Natural killer cell (primary cell): ENCODE measurements at regions of chr3 and their contacts with region 1.

Region 1: GRCh38 chr3:3200632-3201212 is 21.2 kb upstream of the CRBN start:
- DNase-seq: peak in 1 of 2 donors; percentile 68
- ATAC-seq: peak in 2 of 3 donors; percentile 61 to 64
- H3K4me3 ChIP-seq: no peak overlapping the region
- H3K4me3 Mint-ChIP-seq: no peak overlapping the region
- H3K27ac ChIP-seq: no peak overlapping the region
- H3K27ac Mint-ChIP-seq: no peak overlapping the region
- H3K4me1 ChIP-seq: peaks cover 14% of the 10 kb centered on the region
- H3K4me1 Mint-ChIP-seq: peaks cover 15% of the 10 kb centered on the region in 2 donors
- H3K27me3 ChIP-seq: no peaks in the 10 kb centered on the region
- H3K27me3 Mint-ChIP-seq: no peaks in the 10 kb centered on the region
- CTCF ChIP-seq: peak; percentile 81

Region 2: GRCh38 chr3:3134750-3135448 is 65.8 kb before region 1 on chr3:
- intact Hi-C with region 1: no loop called
- DNase-seq: no peak
- ATAC-seq: peak in 2 of 3 donors; percentile 21 to 64
- H3K4me3 ChIP-seq: no peak overlapping the region
- H3K4me3 Mint-ChIP-seq: no peak overlapping the region
- H3K27ac ChIP-seq: no peak overlapping the region
- H3K27ac Mint-ChIP-seq: peak overlapping the region; percentile 6 to 44
- H3K4me1 ChIP-seq: no peaks in the 10 kb centered on the region
- H3K4me1 Mint-ChIP-seq: peaks cover 29 to 39% of the 10 kb centered on the region in 2 donors
- H3K27me3 ChIP-seq: no peaks in the 10 kb centered on the region
- H3K27me3 Mint-ChIP-seq: no peaks in the 10 kb centered on the region
- CTCF ChIP-seq: no peak

Region 3: DNA sequence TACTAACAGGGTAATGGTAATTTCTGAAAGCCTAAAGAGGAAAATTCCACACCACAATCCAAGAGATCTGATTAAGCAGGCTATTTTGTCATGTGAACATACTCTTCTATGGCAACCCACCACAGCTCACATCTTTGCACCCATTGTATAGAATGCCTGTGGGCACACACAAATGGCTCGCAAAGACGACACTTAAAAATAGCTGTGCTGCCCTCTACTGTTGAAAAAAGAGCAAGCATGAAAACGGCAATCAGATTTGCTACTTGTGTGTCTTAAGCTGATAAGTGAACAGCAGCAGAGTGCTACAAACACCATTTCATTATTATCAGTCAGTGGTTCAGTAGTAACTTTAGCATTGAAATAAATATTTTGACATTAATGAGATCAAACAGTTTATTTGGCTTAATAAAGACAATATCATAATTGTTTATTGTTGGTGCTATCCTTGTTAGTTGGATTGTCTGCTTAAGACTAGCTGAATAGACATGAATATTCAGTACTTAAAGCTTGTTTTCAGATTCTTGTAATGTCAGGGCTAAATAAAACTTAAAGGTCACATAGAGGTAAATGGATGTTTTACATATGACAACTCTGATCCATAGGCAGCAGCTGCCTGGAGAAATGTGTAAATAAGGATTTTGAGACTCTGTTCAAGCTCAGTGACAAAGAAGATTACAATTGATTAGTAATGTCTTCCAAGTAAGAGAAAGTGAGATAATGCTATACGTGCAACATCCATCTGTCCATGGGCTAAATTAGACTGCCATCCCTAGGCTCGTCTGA is 797.6 kb after region 1 on chr3:
- intact Hi-C with region 1: loop called (anchors 1 kb)
- DNase-seq: peak in 1 of 2 donors; percentile 46
- ATAC-seq: peak in 2 of 3 donors; percentile 44 to 57
- H3K4me3 ChIP-seq: no peak overlapping the region
- H3K4me3 Mint-ChIP-seq: no peak overlapping the region
- H3K27ac ChIP-seq: no peak overlapping the region
- H3K27ac Mint-ChIP-seq: no peak overlapping the region
- H3K4me1 ChIP-seq: no peaks in the 10 kb centered on the region
- H3K4me1 Mint-ChIP-seq: no peaks in the 10 kb centered on the region
- H3K27me3 ChIP-seq: no peaks in the 10 kb centered on the region
- H3K27me3 Mint-ChIP-seq: no peaks in the 10 kb centered on the region
- CTCF ChIP-seq: peak; percentile 57

Region 4: GRCh38 chr3:4290272-4290893 is 1089.7 kb after region 1 on chr3:
- intact Hi-C with region 1: loop called (anchors 1 kb)
- DNase-seq: peak in 1 of 2 donors; percentile 73
- ATAC-seq: peak; percentile 71 to 81 (median 78)
- H3K4me3 ChIP-seq: no peak overlapping the region
- H3K4me3 Mint-ChIP-seq: no peak overlapping the region
- H3K27ac ChIP-seq: no peak overlapping the region
- H3K27ac Mint-ChIP-seq: no peak overlapping the region
- H3K4me1 ChIP-seq: no peaks in the 10 kb centered on the region
- H3K4me1 Mint-ChIP-seq: peaks cover 0 to 6% of the 10 kb centered on the region in 2 donors
- H3K27me3 ChIP-seq: no peaks in the 10 kb centered on the region
- H3K27me3 Mint-ChIP-seq: peaks cover 0 to 3% of the 10 kb centered on the region in 2 donors
- CTCF ChIP-seq: peak; percentile 90